CD8-positive, alpha-beta T cell (primary cell): ENCODE measurements at regions of chr12 and their contacts with region 1.

Region 1: GRCh38 chr12:47190271-47190750 is 110.6 kb upstream of the AMIGO2 start:
- DNase-seq: peak in 1 of 9 experiments; percentile 25
- ATAC-seq: no peak
- H3K4me3 ChIP-seq: no peak overlapping the region
- H3K4me3 Mint-ChIP-seq: peak overlapping the region; percentile 63
- H3K27ac ChIP-seq: peak overlapping the region in 1 of 2 experiments; percentile 69
- H3K27ac Mint-ChIP-seq: peak overlapping the region; percentile 89
- H3K4me1 ChIP-seq: peaks cover 85% of the 10 kb centered on the region
- H3K4me1 Mint-ChIP-seq: peaks cover 88% of the 10 kb centered on the region
- H3K27me3 ChIP-seq: no peaks in the 10 kb centered on the region
- H3K27me3 Mint-ChIP-seq: no peaks in the 10 kb centered on the region
- CTCF ChIP-seq: no peak

Region 2: DNA sequence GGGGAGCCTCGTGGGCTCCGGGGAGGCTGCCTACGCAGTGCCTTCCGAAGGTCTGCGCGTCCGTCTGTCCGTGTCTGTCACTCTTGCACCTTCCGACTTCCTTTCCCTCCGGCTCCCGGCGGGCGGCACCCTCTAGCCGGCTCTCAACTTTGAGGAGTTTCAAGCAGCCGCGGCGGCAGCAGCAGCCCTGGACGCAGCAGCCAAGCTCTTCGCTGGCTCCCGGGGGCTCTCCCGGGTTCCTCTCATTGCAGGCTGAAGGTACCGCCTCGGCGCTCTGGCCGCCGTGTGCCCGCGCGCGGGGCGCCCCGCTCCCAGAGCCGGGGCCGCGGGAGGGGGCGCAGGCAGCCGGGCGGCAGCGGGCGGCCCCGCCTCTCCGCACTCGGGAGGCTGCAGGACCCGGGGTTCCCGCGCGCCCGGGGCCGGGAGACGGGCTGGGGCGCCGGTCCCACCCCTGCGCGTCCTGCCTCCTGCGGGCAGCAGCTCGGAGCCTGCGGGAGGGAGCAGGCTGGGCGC is 110.8 kb before region 1 on chr12 and contains the starts of genes AMIGO2 and PCED1B:
- CTCF ChIA-PET with region 1: interaction called, 9 read pairs
- POLR2A ChIA-PET with region 1: interaction called, 42 read pairs
- intact Hi-C with region 1: loop called (anchors 1 to 5 kb)
- DNase-seq: peak; percentile 13 to 81 (median 69)
- ATAC-seq: peak; percentile 54
- H3K4me3 ChIP-seq: peak within 1 kb of the TSS; percentile 85 to 92
- H3K4me3 Mint-ChIP-seq: peak within 1 kb of the TSS; percentile 98
- H3K27ac ChIP-seq: peak within 1 kb of the TSS; percentile 63 to 85
- H3K27ac Mint-ChIP-seq: peak within 1 kb of the TSS; percentile 96
- H3K4me1 ChIP-seq: peaks cover 55% of the 10 kb centered on the region
- H3K4me1 Mint-ChIP-seq: peaks cover 76% of the 10 kb centered on the region
- H3K27me3 ChIP-seq: no peaks in the 10 kb centered on the region
- H3K27me3 Mint-ChIP-seq: no peaks in the 10 kb centered on the region
- CTCF ChIP-seq: no peak
- total RNA-seq, gene AMIGO2: 12.5 to 13.5 TPM
- total RNA-seq, gene PCED1B: 32.9 to 33.7 TPM

Region 3: DNA sequence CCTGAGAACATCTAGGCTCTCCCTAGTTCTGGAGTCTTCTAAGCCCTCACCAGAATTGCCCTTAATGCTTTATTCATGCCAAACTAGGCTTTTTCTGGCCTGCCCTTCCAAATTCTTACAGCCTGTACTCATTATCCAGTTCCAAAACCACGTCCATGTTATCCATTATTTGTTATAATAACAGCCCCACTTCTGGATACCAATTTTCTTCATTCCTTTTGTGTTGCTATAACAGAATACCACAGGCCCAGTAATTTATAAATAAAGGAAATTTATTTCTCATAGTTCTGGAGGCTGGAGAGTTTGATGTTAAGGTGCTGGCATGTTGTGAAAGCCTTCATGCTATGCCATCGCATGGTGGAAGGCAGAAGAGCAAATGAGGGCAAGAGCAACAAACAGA is 42.6 kb before region 1 on chr12:
- CTCF ChIA-PET with region 1: no interaction called
- POLR2A ChIA-PET with region 1: no interaction called
- intact Hi-C with region 1: loop called in 1 of 2 experiments (anchors 5 kb)
- DNase-seq: no peak
- ATAC-seq: no peak
- H3K4me3 ChIP-seq: no peak overlapping the region
- H3K4me3 Mint-ChIP-seq: no peak overlapping the region
- H3K27ac ChIP-seq: no peak overlapping the region
- H3K27ac Mint-ChIP-seq: no peak overlapping the region
- H3K4me1 ChIP-seq: peaks cover 14% of the 10 kb centered on the region
- H3K4me1 Mint-ChIP-seq: peaks cover 32% of the 10 kb centered on the region
- H3K27me3 ChIP-seq: no peaks in the 10 kb centered on the region
- H3K27me3 Mint-ChIP-seq: no peaks in the 10 kb centered on the region
- CTCF ChIP-seq: no peak

Region 4: GRCh38 chr12:47178014-47178413 is 12.3 kb before region 1 on chr12:
- CTCF ChIA-PET with region 1: interaction called, 4 read pairs
- POLR2A ChIA-PET with region 1: interaction called, 5 read pairs
- intact Hi-C with region 1: loop called in 1 of 2 experiments (anchors 2 kb)
- DNase-seq: peak in 1 of 9 experiments; percentile 12
- ATAC-seq: no peak
- H3K4me3 ChIP-seq: no peak overlapping the region
- H3K4me3 Mint-ChIP-seq: no peak overlapping the region
- H3K27ac ChIP-seq: no peak overlapping the region
- H3K27ac Mint-ChIP-seq: no peak overlapping the region
- H3K4me1 ChIP-seq: no peaks in the 10 kb centered on the region
- H3K4me1 Mint-ChIP-seq: peaks cover 39% of the 10 kb centered on the region
- H3K27me3 ChIP-seq: no peaks in the 10 kb centered on the region
- H3K27me3 Mint-ChIP-seq: no peaks in the 10 kb centered on the region
- CTCF ChIP-seq: no peak

Region 5: GRCh38 chr12:47223848-47224213 is 33.5 kb after region 1 on chr12:
- CTCF ChIA-PET with region 1: interaction called, 7 read pairs
- POLR2A ChIA-PET with region 1: interaction called, 12 read pairs
- intact Hi-C with region 1: no loop called
- DNase-seq: no peak
- ATAC-seq: no peak
- H3K4me3 ChIP-seq: peak overlapping the region; percentile 16 to 31
- H3K4me3 Mint-ChIP-seq: peak overlapping the region; percentile 83
- H3K27ac ChIP-seq: peak overlapping the region in 1 of 2 experiments; percentile 64
- H3K27ac Mint-ChIP-seq: peak overlapping the region; percentile 97
- H3K4me1 ChIP-seq: peaks cover 58% of the 10 kb centered on the region
- H3K4me1 Mint-ChIP-seq: peaks cover 83% of the 10 kb centered on the region
- H3K27me3 ChIP-seq: no peaks in the 10 kb centered on the region
- H3K27me3 Mint-ChIP-seq: no peaks in the 10 kb centered on the region
- CTCF ChIP-seq: no peak

Region 6: GRCh38 chr12:47376937-47377336 is 186.6 kb after region 1 on chr12:
- CTCF ChIA-PET with region 1: no interaction called
- POLR2A ChIA-PET with region 1: no interaction called
- intact Hi-C with region 1: no loop called
- DNase-seq: no peak
- ATAC-seq: no peak
- H3K4me3 ChIP-seq: no peak overlapping the region
- H3K4me3 Mint-ChIP-seq: no peak overlapping the region
- H3K27ac ChIP-seq: no peak overlapping the region
- H3K27ac Mint-ChIP-seq: no peak overlapping the region
- H3K4me1 ChIP-seq: peaks cover 16% of the 10 kb centered on the region
- H3K4me1 Mint-ChIP-seq: peaks cover 39% of the 10 kb centered on the region
- H3K27me3 ChIP-seq: no peaks in the 10 kb centered on the region
- H3K27me3 Mint-ChIP-seq: no peaks in the 10 kb centered on the region
- CTCF ChIP-seq: no peak

Region 7: DNA sequence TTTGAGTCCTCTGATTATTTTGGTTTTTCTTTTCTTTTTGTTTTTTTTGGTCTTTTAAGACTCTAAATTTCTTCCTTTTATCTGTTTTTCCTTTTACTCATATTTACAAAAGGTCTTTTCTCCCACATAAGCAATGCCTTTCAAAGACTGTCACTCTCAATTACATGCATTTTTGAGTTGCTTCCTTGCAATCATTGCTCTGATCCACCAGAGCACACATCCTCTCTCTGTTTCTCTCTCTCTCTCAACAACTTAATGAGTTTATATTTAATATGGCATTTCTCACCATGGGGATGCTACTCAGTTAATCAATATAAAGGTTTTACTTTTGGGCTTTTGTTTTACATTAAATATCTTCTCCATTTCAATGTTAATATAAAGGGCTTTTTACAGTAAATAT is 1075.5 kb after region 1 on chr12:
- CTCF ChIA-PET with region 1: no interaction called
- POLR2A ChIA-PET with region 1: no interaction called
- intact Hi-C with region 1: no loop called
- DNase-seq: no peak
- ATAC-seq: no peak
- H3K4me3 ChIP-seq: no peak overlapping the region
- H3K4me3 Mint-ChIP-seq: no peak overlapping the region
- H3K27ac ChIP-seq: no peak overlapping the region
- H3K27ac Mint-ChIP-seq: no peak overlapping the region
- H3K4me1 ChIP-seq: no peaks in the 10 kb centered on the region
- H3K4me1 Mint-ChIP-seq: no peaks in the 10 kb centered on the region
- H3K27me3 ChIP-seq: peaks cover 0 to 5% of the 10 kb centered on the region in 2 experiments
- H3K27me3 Mint-ChIP-seq: peaks cover 4% of the 10 kb centered on the region
- CTCF ChIP-seq: no peak